Activated B cell treated with CpG ODN at 0.5 μM for 24 hours (primary cell): ENCODE measurements at regions of chr4 and their contacts with region 1.

Region 1: GRCh38 chr4:25842229-25842845 is 20.5 kb downstream of the SEL1L3 start:
- DNase-seq: peak; percentile 51
- ATAC-seq: peak; percentile 87
- H3K4me3 Mint-ChIP-seq: peak overlapping the region; percentile 61
- H3K27ac Mint-ChIP-seq: peak overlapping the region; percentile 86
- H3K4me1 Mint-ChIP-seq: peaks cover 77% of the 10 kb centered on the region
- H3K27me3 Mint-ChIP-seq: no peaks in the 10 kb centered on the region
- CTCF ChIP-seq: no peak

Region 2: GRCh38 chr4:25723409-25723808 is 118.9 kb before region 1 on chr4:
- CTCF ChIA-PET with region 1: no interaction called
- POLR2A ChIA-PET with region 1: no interaction called
- intact Hi-C with region 1: no loop called
- DNase-seq: no peak
- ATAC-seq: no peak
- H3K4me3 Mint-ChIP-seq: no peak overlapping the region
- H3K27ac Mint-ChIP-seq: no peak overlapping the region
- H3K4me1 Mint-ChIP-seq: peaks cover 13% of the 10 kb centered on the region
- H3K27me3 Mint-ChIP-seq: no peaks in the 10 kb centered on the region
- CTCF ChIP-seq: no peak

Region 3: GRCh38 chr4:25813448-25814106 is 28.8 kb before region 1 on chr4:
- CTCF ChIA-PET with region 1: no interaction called
- POLR2A ChIA-PET with region 1: no interaction called
- intact Hi-C with region 1: no loop called
- DNase-seq: no peak
- ATAC-seq: no peak
- H3K4me3 Mint-ChIP-seq: no peak overlapping the region
- H3K27ac Mint-ChIP-seq: no peak overlapping the region
- H3K4me1 Mint-ChIP-seq: no peaks in the 10 kb centered on the region
- H3K27me3 Mint-ChIP-seq: no peaks in the 10 kb centered on the region
- CTCF ChIP-seq: no peak

Region 4: GRCh38 chr4:25830548-25830947 is 11.8 kb before region 1 on chr4:
- CTCF ChIA-PET with region 1: no interaction called
- POLR2A ChIA-PET with region 1: no interaction called
- intact Hi-C with region 1: no loop called
- DNase-seq: no peak
- ATAC-seq: no peak
- H3K4me3 Mint-ChIP-seq: no peak overlapping the region
- H3K27ac Mint-ChIP-seq: no peak overlapping the region
- H3K4me1 Mint-ChIP-seq: peaks cover 14% of the 10 kb centered on the region
- H3K27me3 Mint-ChIP-seq: no peaks in the 10 kb centered on the region
- CTCF ChIP-seq: no peak

Region 5: GRCh38 chr4:25862411-25863346 is 20.3 kb after region 1 on chr4 and contains the start of gene SEL1L3:
- CTCF ChIA-PET with region 1: interaction called, 9 read pairs
- POLR2A ChIA-PET with region 1: interaction called, 9 read pairs
- intact Hi-C with region 1: loop called (anchors 1 kb)
- DNase-seq: peak; percentile 68
- ATAC-seq: peak; percentile 39
- H3K4me3 Mint-ChIP-seq: peak within 1 kb of the TSS; percentile 98
- H3K27ac Mint-ChIP-seq: peak within 1 kb of the TSS; percentile 99
- H3K4me1 Mint-ChIP-seq: peaks cover 84% of the 10 kb centered on the region
- H3K27me3 Mint-ChIP-seq: no peaks in the 10 kb centered on the region
- CTCF ChIP-seq: no peak
- total RNA-seq, gene SEL1L3: 102 and 113 TPM in 2 replicates

Region 6: GRCh38 chr4:25925486-25926201 is 83.3 kb after region 1 on chr4:
- CTCF ChIA-PET with region 1: interaction called, 9 read pairs
- POLR2A ChIA-PET with region 1: no interaction called
- intact Hi-C with region 1: loop called (anchors 1 kb)
- DNase-seq: no peak
- ATAC-seq: peak; percentile 57
- H3K4me3 Mint-ChIP-seq: no peak overlapping the region
- H3K27ac Mint-ChIP-seq: no peak overlapping the region
- H3K4me1 Mint-ChIP-seq: no peaks in the 10 kb centered on the region
- H3K27me3 Mint-ChIP-seq: no peaks in the 10 kb centered on the region
- CTCF ChIP-seq: no peak

Region 7: GRCh38 chr4:26028793-26029567 is 186.6 kb after region 1 on chr4:
- CTCF ChIA-PET with region 1: interaction called, 3 read pairs
- POLR2A ChIA-PET with region 1: no interaction called
- intact Hi-C with region 1: loop called (anchors 1 kb)
- DNase-seq: peak; percentile 55
- ATAC-seq: peak; percentile 92
- H3K4me3 Mint-ChIP-seq: no peak overlapping the region
- H3K27ac Mint-ChIP-seq: no peak overlapping the region
- H3K4me1 Mint-ChIP-seq: peaks cover 2% of the 10 kb centered on the region
- H3K27me3 Mint-ChIP-seq: peaks cover 13% of the 10 kb centered on the region
- CTCF ChIP-seq: no peak

Region 8: DNA sequence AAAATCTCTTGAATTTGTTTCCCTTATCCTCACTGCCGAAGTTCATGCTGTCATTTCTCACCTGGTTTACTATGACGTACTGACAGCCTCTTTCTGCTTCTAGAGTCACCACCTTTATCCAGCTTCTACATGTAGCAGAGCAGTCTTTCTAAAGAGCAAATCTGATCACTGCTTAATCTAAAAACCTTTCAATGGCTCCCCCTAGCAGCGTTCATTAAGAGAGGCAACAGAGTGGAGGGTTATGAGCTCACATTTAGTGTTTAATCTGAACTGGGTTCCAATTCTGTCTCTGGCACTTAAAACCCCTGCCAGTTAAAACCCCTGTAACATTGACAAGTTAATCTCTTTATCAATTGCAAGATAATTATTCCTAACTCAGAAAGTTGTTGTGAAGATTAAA is 482.9 kb after region 1 on chr4:
- CTCF ChIA-PET with region 1: interaction called, 15 read pairs
- POLR2A ChIA-PET with region 1: interaction called, 3 read pairs
- intact Hi-C with region 1: loop called (anchors 1 kb)
- DNase-seq: no peak
- ATAC-seq: peak; percentile 12
- H3K4me3 Mint-ChIP-seq: no peak overlapping the region
- H3K27ac Mint-ChIP-seq: no peak overlapping the region
- H3K4me1 Mint-ChIP-seq: peaks cover 28% of the 10 kb centered on the region
- H3K27me3 Mint-ChIP-seq: no peaks in the 10 kb centered on the region
- CTCF ChIP-seq: no peak